ENCODE measurements at regions of chr9 and their contacts with region 1.

Region 1: GRCh38 chr9:69971643-69972449 is 71.8 kb upstream of the MAMDC2 start:
- DNase-seq: peak; percentile 50 to 85
- H3K4me3 ChIP-seq: no peak overlapping the region
- H3K27ac ChIP-seq: no peak overlapping the region
- H3K4me1 ChIP-seq: peaks cover 0 to 2% (median under 1%) of the 10 kb centered on the region in 4 experiments; a peak in 2 of 7 replicates
- H3K27me3 ChIP-seq: no peaks in the 10 kb centered on the region
- CTCF ChIP-seq: peak; percentile 88 to 95 (median 90)
- EP300 ChIP-seq: no peak
- POLR2A ChIP-seq: no peak
- RAD21 ChIP-seq: peak; percentile 97 to 99

Region 2: DNA sequence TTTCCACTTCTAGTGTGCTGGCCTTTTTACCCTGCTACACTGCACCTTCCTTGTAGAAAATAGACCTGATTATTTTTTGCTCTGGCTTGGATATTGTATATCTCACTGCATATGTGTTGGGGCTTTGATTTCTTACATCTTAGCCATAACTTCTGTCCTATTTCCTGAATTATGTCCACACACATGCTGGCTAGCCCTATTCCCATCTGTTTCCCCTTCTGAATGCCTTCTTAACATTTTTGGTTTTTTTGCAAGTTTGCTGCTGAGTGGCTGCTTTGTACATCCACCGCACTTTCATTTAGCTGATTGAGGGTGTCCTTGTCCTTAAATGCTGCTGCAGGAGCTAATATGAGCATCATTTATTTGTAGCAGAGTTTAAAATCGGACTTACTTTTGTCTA is 124.4 kb before region 1 on chr9:
- CTCF ChIA-PET with region 1: no interaction called
- POLR2A ChIA-PET with region 1: no interaction called
- DNase-seq: no peak
- H3K4me3 ChIP-seq: no peak overlapping the region
- H3K27ac ChIP-seq: no peak overlapping the region
- H3K4me1 ChIP-seq: no peaks in the 10 kb centered on the region
- H3K27me3 ChIP-seq: no peaks in the 10 kb centered on the region
- CTCF ChIP-seq: no peak
- EP300 ChIP-seq: no peak
- POLR2A ChIP-seq: no peak
- RAD21 ChIP-seq: no peak

Region 3: DNA sequence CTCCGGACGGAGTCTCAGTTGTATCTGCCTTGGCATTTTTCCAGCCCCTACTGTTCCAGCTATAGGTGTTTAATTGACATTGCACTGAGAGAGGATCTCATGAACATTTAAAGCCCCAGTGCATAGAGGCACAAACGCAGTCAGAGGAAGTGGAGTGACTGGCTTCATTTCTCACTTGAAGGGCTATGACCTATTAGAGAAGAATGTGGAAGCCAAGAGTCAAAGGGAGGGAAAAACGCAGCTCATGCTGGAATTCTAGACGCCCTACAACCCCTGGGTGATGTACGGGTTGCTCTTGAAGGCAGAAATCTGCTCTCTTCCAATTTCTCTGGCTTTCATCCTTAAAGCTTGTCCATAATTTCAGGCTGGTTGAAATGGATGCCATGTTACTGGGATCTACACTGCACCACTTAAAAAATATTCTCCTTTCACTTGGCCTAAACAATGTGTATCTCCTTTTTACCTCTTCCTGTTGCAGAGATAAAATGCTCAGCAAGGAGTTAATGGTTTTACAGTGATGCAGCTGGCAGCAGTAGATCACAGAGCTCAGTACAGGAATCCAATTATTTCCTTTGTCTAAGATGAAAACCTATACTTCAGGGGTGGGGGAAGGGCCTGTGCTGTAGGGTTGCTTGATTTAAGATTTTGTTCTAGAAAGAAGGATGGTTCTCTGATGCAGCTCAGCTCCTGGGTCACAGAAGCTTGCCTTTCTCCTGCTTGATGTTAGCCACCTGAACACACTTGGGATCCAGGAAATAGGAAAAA is 10.0 kb after region 1 on chr9:
- CTCF ChIA-PET with region 1: interaction called, 12 read pairs
- POLR2A ChIA-PET with region 1: no interaction called
- DNase-seq: no peak
- H3K4me3 ChIP-seq: no peak overlapping the region
- H3K27ac ChIP-seq: no peak overlapping the region
- H3K4me1 ChIP-seq: peaks cover 0 to 3% (median 0%) of the 10 kb centered on the region in 4 experiments; a peak in 1 of 7 replicates
- H3K27me3 ChIP-seq: no peaks in the 10 kb centered on the region
- CTCF ChIP-seq: no peak
- EP300 ChIP-seq: no peak
- POLR2A ChIP-seq: no peak
- RAD21 ChIP-seq: no peak

Region 4: DNA sequence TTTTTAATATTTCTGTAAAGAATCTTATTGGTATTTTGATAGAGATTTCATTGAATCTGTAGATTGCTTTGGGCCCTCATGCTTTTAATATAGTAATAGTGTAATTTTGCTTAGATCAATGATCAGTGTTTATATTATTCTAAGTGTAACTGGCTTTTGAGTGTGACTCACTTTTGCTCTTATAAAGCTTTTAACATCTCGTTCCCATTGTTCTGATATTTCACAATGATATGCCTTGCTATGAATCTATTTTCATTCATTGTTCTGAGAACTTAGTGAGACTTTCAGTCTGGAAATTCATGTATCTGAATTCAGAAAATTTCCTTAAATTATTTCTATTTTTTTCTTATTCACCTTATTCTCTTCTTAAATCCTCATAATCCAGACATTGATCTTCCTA is 58.3 kb after region 1 on chr9:
- CTCF ChIA-PET with region 1: no interaction called
- POLR2A ChIA-PET with region 1: no interaction called
- DNase-seq: no peak
- H3K4me3 ChIP-seq: no peak overlapping the region
- H3K27ac ChIP-seq: no peak overlapping the region
- H3K4me1 ChIP-seq: no peaks in the 10 kb centered on the region
- H3K27me3 ChIP-seq: no peaks in the 10 kb centered on the region
- CTCF ChIP-seq: no peak
- EP300 ChIP-seq: no peak
- POLR2A ChIP-seq: no peak
- RAD21 ChIP-seq: no peak

Region 5: DNA sequence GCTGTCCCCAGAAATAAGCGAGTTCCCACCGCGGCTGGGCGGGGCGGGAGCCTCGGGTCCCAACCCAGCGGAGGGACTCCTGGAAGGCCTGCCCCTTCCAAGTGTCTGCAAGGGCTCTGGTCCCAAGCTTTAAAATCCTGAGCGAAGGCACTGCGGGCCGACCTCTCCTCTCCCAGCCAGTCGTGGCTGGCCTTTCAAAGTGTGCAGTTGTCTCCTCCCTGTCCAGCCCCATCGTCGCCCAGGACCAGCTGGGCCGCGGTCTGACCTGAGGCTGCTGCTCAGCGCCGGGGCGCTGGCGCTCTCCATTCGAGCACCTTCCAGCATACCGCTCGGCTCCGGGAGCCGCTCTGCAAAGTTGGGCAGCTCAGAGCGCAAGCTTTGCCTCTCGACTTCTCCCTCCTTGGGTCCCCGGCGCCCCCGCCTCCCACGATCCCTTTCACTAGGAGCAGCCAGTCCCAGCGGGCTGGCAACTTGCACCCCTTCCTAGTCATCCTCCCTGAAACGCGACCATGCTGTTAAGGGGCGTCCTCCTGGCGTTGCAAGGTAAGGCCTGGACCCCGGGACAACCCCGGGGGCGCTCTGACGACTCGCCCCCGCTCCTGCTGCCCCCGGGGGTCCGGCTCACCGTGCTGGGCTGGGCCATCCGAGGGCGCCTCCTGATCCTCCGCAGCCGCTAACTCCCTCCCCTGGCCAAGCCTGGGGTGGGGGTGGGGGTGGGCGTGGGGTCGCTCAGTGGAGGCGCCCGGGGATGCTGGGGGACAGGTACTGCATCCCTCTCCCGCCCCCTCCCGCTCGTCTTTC is 72.0 kb after region 1 on chr9 and contains the start of gene MAMDC2:
- CTCF ChIA-PET with region 1: interaction called, 13 read pairs
- POLR2A ChIA-PET with region 1: interaction called, 4 read pairs
- DNase-seq: peak in 1 of 2 experiments; percentile 84
- H3K4me3 ChIP-seq: peak within 1 kb of the TSS; percentile 54 to 79 (median 58)
- H3K27ac ChIP-seq: no peak within 1 kb of the TSS
- H3K4me1 ChIP-seq: peaks cover 6 to 14% (median 10%) of the 10 kb centered on the region in 4 experiments
- H3K27me3 ChIP-seq: no peaks in the 10 kb centered on the region
- CTCF ChIP-seq: no peak
- EP300 ChIP-seq: no peak
- POLR2A ChIP-seq: peak; percentile 49 to 72; a peak in 2 of 3 replicates
- RAD21 ChIP-seq: no peak
- total RNA-seq, gene MAMDC2: 15.3 and 15.4 TPM in 2 replicates

Region 6: GRCh38 chr9:70229579-70229978 is 257.7 kb after region 1 on chr9:
- CTCF ChIA-PET with region 1: interaction called, 20 read pairs
- POLR2A ChIA-PET with region 1: no interaction called
- DNase-seq: no peak
- H3K4me3 ChIP-seq: no peak overlapping the region
- H3K27ac ChIP-seq: no peak overlapping the region
- H3K4me1 ChIP-seq: no peaks in the 10 kb centered on the region
- H3K27me3 ChIP-seq: no peaks in the 10 kb centered on the region
- CTCF ChIP-seq: peak in 2 of 3 experiments; percentile 15 to 39; a peak in 2 of 4 replicates
- EP300 ChIP-seq: no peak
- POLR2A ChIP-seq: no peak
- RAD21 ChIP-seq: peak in 1 of 2 experiments; percentile 68

Measured in H1 (cell line).